GM18951 (cell line): ENCODE measurements at regions of chr17 and their contacts with region 1.

Region 1: DNA sequence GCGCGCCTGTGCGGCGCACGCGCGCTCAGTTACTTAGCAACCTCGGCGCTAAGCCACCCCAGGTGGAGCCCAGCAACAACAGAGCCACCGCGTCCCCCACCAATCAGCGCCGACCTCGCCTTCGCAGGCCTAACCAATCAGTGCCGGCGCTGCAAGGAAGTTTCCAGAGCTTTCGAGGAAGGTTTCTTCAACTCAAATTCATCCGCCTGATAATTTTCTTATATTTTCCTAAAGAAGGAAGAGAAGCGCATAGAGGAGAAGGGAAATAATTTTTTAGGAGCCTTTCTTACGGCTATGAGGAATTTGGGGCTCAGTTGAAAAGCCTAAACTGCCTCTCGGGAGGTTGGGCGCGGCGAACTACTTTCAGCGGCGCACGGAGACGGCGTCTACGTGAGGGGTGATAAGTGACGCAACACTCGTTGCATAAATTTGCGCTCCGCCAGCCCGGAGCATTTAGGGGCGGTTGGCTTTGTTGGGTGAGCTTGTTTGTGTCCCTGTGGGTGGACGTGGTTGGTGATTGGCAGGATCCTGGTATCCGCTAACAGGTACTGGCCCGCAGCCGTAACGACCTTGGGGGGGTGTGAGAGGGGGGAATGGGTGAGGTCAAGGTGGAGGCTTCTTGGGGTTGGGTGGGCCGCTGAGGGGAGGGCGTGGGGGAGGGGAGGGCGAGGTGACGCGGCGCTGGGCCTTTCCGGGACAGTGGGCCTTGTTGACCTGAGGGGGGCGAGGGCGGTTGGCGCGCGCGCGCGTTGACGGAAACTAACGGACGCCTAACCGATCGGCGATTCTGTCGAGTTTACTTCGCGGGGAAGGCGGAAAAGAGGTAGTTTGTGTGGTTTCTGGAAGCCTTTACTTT is at the start of gene UBB:
- POLR2A ChIP-seq: peak; percentile 100

Region 2: GRCh38 chr17:15944759-15945529 is 435.9 kb before region 1 on chr17 and contains the start of gene ADORA2B:
- in situ Hi-C with region 1: no loop called
- POLR2A ChIP-seq: peak; percentile 27

Region 3: DNA sequence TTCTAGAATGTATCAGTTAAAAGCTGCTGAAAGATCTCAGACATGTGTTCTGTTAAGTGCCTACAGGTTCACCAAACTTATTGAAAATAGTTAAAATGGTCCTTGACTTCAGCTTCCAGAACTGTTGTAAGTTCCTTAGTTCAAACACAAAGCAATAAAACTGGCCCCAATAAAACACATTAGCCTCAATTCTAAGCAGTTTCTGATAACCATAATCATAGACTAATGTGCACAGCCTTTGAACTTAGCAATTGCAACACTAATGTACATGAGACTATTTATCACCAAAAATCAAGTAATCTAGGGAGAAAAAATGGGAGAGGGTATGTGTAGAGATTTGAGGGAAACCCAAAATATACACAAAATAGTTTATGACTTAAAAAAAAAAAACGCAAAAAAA is 148.5 kb before region 1 on chr17:
- in situ Hi-C with region 1: no loop called
- POLR2A ChIP-seq: no peak

Region 4: DNA sequence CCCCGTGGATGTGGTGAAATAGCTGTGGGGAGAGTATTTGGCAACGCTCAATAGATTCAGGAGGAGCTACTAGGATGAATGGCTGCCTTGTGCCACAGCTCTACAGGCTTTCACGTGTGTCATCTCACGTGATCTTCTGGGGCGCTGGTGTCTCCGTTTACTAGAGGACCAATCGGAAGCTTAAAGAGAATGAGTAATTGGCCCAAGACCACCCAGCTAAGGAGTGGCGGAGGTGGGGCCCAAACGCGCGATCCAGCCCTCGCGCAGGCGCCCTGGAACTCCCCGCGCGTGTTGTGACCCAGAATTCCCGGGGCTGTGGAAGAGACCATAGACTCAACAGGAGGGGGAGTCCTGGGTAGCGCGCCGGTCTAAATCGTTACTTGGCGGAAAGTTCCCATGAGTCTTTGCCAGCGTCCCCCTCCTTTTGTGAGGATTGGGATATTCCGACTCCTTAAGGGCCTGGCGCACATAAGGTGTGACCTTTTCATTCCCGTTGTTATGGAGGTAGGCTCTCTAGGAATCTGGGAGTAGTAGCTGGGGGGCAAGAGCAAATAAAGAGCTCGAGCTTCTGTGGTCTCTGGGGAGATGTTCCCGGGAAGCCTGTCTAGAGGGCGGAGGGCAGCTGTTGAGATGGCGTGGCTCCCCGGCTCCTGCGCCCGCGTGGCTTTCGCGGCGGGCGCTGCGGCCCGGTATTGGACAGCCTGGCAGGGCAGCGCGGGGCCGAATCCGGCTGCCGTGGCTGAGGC is 57.9 kb after region 1 on chr17:
- in situ Hi-C with region 1: loop called (anchors 10 kb)
- POLR2A ChIP-seq: peak; percentile 93

Region 5: DNA sequence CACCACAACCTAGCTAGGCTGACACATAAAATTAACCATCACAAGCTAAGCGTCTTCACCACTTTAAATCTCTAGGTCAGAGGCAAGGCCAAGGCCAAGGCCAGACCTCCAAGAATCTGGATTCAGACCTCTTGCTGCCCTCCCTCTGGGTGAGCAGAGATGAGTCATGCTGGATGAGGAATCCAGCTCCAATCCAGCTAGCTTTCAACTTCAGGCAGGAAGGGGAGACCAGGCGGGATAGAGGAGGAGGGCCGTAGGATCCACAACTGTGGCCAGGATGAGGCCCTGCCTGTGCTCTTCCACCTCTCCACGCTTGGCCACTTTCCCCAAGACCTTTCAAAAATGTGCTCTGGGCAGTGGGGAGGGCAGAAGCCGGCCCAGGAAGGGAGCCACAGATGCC is 96.4 kb after region 1 on chr17:
- in situ Hi-C with region 1: no loop called
- POLR2A ChIP-seq: no peak